WTC11 (cell line): ENCODE measurements at regions of chr9 and their contacts with region 1.

Region 1: DNA sequence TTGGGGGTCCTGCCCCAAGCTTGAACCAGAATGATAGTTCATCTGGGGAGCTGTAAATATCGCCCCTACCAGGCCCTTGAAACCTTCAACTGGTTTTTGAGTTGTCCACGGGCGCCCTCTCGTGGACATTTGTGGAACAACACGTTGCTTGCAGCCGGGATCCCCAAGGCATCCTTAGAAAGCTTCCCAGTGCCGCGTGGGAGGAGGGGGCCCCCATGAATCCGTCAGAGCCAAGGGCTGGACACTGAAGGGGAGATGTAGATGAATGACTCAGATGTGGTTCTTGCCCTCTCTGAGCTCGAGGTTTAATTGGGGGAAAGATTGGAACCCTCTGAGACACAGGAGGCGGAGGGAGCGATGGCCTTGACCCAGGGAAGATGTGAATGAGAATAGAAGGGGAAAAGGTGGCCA is 31.8 kb upstream of the ORM1 start:
- DNase-seq: peak; percentile 88
- ATAC-seq: peak; percentile 65
- H3K4me3 Mint-ChIP-seq: no peak overlapping the region
- H3K27ac Mint-ChIP-seq: no peak overlapping the region
- H3K4me1 Mint-ChIP-seq: peaks cover 7% of the 10 kb centered on the region
- H3K27me3 Mint-ChIP-seq: no peaks in the 10 kb centered on the region
- CTCF ChIP-seq: peak; percentile 95

Region 2: GRCh38 chr9:114098016-114098935 is 192.8 kb before region 1 on chr9:
- CTCF ChIA-PET with region 1: interaction called, 49 read pairs
- POLR2A ChIA-PET with region 1: no interaction called
- DNase-seq: peak; percentile 89
- ATAC-seq: peak; percentile 87
- H3K4me3 Mint-ChIP-seq: peak overlapping the region; percentile 87
- H3K27ac Mint-ChIP-seq: no peak overlapping the region
- H3K4me1 Mint-ChIP-seq: peaks cover 18% of the 10 kb centered on the region
- H3K27me3 Mint-ChIP-seq: peaks cover 70% of the 10 kb centered on the region
- CTCF ChIP-seq: no peak

Region 3: GRCh38 chr9:114141553-114142402 is 149.3 kb before region 1 on chr9:
- CTCF ChIA-PET with region 1: interaction called, 13 read pairs
- POLR2A ChIA-PET with region 1: no interaction called
- DNase-seq: no peak
- ATAC-seq: no peak
- H3K4me3 Mint-ChIP-seq: no peak overlapping the region
- H3K27ac Mint-ChIP-seq: no peak overlapping the region
- H3K4me1 Mint-ChIP-seq: no peaks in the 10 kb centered on the region
- H3K27me3 Mint-ChIP-seq: peaks cover 65% of the 10 kb centered on the region
- CTCF ChIP-seq: no peak

Region 4: DNA sequence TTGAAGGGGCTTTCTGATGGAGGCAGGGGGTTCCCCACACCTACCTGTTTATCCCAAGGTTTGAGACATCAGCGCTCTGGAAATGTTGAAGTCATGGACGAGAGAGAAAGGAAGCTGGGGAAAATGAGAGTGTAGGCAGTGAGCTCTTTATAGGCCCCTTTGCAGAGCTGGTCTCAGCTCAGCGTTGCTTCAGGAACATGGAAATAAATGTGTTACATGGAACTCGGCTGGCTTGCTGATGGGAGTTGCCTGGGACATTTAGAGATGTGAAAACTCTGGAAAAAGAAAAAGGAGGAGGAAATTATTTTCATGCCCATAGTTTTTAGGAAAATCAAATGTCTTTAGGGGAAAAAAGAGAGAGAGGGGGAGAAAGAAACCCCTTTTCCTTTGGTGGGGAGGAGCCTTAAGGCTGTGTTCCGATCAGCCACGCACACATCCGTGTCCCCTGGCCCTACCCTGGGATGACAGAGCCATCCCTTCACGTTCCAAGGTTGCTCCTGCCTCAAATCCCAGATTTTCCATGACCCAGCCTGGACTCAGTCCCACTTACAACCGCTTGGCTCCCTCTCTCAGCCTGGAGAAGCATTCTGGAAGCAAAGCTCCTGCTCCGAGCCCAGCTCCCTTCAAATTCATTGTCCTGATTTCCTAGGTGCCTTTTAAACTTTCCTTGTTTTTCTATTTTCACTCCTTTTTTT is 57.4 kb before region 1 on chr9:
- CTCF ChIA-PET with region 1: interaction called, 23 read pairs
- POLR2A ChIA-PET with region 1: no interaction called
- DNase-seq: no peak
- ATAC-seq: no peak
- H3K4me3 Mint-ChIP-seq: no peak overlapping the region
- H3K27ac Mint-ChIP-seq: 0 out of 2 replicates have a peak overlapping the region, but pooled peaks have one; percentile 33
- H3K4me1 Mint-ChIP-seq: 0 out of 2 replicates have a peak, but pooled peaks cover 3% of the 10 kb centered on the region
- H3K27me3 Mint-ChIP-seq: no peaks in the 10 kb centered on the region
- CTCF ChIP-seq: no peak

Region 5: GRCh38 chr9:114263853-114264510 is 27.1 kb before region 1 on chr9:
- CTCF ChIA-PET with region 1: interaction called, 27 read pairs
- POLR2A ChIA-PET with region 1: no interaction called
- DNase-seq: peak; percentile 54
- ATAC-seq: peak; percentile 65
- H3K4me3 Mint-ChIP-seq: no peak overlapping the region
- H3K27ac Mint-ChIP-seq: no peak overlapping the region
- H3K4me1 Mint-ChIP-seq: no peaks in the 10 kb centered on the region
- H3K27me3 Mint-ChIP-seq: no peaks in the 10 kb centered on the region
- CTCF ChIP-seq: no peak

Region 6: DNA sequence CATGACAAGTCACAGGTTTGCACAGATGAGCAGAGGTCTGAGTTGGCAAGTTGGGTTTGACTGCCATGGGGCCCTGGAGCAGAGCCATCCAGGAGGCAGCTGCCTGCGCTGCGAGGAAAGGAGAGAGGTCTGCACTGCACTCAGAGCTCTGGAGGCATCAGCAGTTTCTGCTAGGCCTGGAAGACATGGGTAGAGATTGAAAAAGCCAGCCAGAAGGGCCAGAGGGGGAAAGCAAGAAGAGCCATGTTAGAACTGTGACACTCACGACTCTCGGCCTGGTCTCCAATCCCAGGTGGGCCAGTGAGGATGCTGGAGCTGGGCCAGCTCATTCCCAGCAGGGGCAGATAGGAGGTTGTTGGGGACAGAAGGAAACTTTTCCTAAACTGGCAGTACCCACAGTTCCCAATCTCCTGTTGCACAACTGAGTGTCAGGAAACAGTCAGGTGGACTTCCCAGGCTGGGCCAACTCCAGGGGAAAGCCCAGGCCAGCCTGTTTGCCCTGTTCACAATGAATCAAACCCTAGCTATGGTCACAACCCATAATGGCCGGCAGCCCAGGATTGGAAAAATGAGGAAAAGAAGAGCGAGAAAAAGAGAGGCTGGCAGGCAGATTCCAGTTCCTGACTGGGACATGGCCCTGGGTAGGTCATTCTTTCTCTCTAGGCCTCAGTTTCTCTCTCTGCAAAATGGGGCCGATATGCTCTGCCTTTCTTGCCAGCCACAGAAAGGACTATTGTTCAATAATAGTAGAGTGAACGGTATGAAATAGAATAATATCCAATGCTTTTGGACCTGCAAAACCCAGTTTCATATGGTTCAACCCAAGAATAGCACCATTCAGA is 24.0 kb after region 1 on chr9:
- CTCF ChIA-PET with region 1: interaction called, 10 read pairs
- POLR2A ChIA-PET with region 1: interaction called, 4 read pairs
- DNase-seq: no peak
- ATAC-seq: no peak
- H3K4me3 Mint-ChIP-seq: no peak overlapping the region
- H3K27ac Mint-ChIP-seq: no peak overlapping the region
- H3K4me1 Mint-ChIP-seq: 0 out of 2 replicates have a peak, but pooled peaks cover 3% of the 10 kb centered on the region
- H3K27me3 Mint-ChIP-seq: peaks cover 5% of the 10 kb centered on the region
- CTCF ChIP-seq: no peak

Region 7: DNA sequence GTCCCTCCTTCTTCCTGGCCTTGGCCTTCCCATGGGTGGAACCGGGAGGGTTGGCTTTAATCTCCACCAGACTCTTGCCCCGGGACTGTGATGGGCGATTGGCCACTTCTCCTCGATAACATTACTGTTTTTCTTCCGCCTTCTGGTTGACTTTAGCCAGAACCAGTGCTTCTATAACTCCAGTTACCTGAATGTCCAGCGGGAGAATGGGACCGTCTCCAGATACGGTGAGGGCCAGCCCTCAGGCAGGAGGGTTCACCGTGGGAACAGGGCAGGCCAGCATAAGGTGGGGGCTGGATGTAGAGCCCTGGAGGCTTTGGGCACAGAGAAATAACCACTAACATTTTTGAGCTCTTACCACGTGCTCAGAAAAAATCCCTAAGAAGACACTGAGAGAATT is 39.6 kb after region 1 on chr9:
- CTCF ChIA-PET with region 1: no interaction called
- POLR2A ChIA-PET with region 1: no interaction called
- DNase-seq: no peak
- ATAC-seq: no peak
- H3K4me3 Mint-ChIP-seq: no peak overlapping the region
- H3K27ac Mint-ChIP-seq: no peak overlapping the region
- H3K4me1 Mint-ChIP-seq: no peaks in the 10 kb centered on the region
- H3K27me3 Mint-ChIP-seq: peaks cover 3% of the 10 kb centered on the region; the same call in 1 of the 2 replicates
- CTCF ChIP-seq: no peak